ENCODE measurements at regions of chr13 and their contacts with region 1.

Region 1: GRCh38 chr13:101127741-101128353 is 288.5 kb downstream of the NALCN start:
- DNase-seq: no peak
- H3K4me3 ChIP-seq: no peak overlapping the region
- H3K27ac ChIP-seq: no peak overlapping the region
- H3K4me1 ChIP-seq: no peaks in the 10 kb centered on the region
- H3K27me3 ChIP-seq: no peaks in the 10 kb centered on the region
- CTCF ChIP-seq: peak in 9 of 11 experiments; percentile 30 to 70 (median 55)
- POLR2A ChIP-seq: no peak

Region 2: GRCh38 chr13:100573121-100573520 is 554.7 kb before region 1 on chr13:
- intact Hi-C with region 1: loop called (anchors 5 kb)
- DNase-seq: no peak
- H3K4me3 ChIP-seq: no peak overlapping the region
- H3K27ac ChIP-seq: no peak overlapping the region
- H3K4me1 ChIP-seq: no peaks in the 10 kb centered on the region
- H3K27me3 ChIP-seq: no peaks in the 10 kb centered on the region
- CTCF ChIP-seq: peak; percentile 43 to 81 (median 67)
- POLR2A ChIP-seq: no peak

Region 3: GRCh38 chr13:101170306-101170705 is 42.5 kb after region 1 on chr13:
- intact Hi-C with region 1: no loop called
- DNase-seq: no peak
- H3K4me3 ChIP-seq: no peak overlapping the region
- H3K27ac ChIP-seq: no peak overlapping the region
- H3K4me1 ChIP-seq: no peaks in the 10 kb centered on the region
- H3K27me3 ChIP-seq: no peaks in the 10 kb centered on the region
- CTCF ChIP-seq: no peak
- POLR2A ChIP-seq: no peak

Measured in spleen (tissue), 13 donors.